OCI-LY7 (cell line): ENCODE measurements at regions of chrX and their contacts with region 1.

Region 1: GRCh38 chrX:41333744-41334259 is at the start of gene DDX3X:
- DNase-seq: peak; percentile 90
- H3K4me3 ChIP-seq: peak within 1 kb of the TSS; percentile 100
- H3K27ac ChIP-seq: peak within 1 kb of the TSS; percentile 93
- H3K4me1 ChIP-seq: peaks cover 50% of the 10 kb centered on the region
- CTCF ChIP-seq: no peak
- total RNA-seq, gene DDX3X: 69.6 and 75.1 TPM in 2 replicates

Region 2: GRCh38 chrX:40735325-40736169 is 598.3 kb before region 1 on chrX and contains the start of gene MED14:
- CTCF ChIA-PET with region 1: no interaction called
- POLR2A ChIA-PET with region 1: no interaction called
- intact Hi-C with region 1: loop called (anchors 10 kb)
- DNase-seq: peak; percentile 89
- H3K4me3 ChIP-seq: peak within 1 kb of the TSS; percentile 87
- H3K27ac ChIP-seq: peak within 1 kb of the TSS; percentile 85
- H3K4me1 ChIP-seq: peaks cover 19% of the 10 kb centered on the region
- CTCF ChIP-seq: peak; percentile 52
- total RNA-seq, gene MED14: 28.1 and 39.4 TPM in 2 replicates

Region 3: GRCh38 chrX:41084044-41084892 is 249.5 kb before region 1 on chrX:
- CTCF ChIA-PET with region 1: no interaction called
- POLR2A ChIA-PET with region 1: interaction called, 4 read pairs
- intact Hi-C with region 1: loop called (anchors 5 kb)
- DNase-seq: peak; percentile 91
- H3K4me3 ChIP-seq: peak overlapping the region; percentile 97
- H3K27ac ChIP-seq: peak overlapping the region; percentile 95
- H3K4me1 ChIP-seq: peaks cover 32% of the 10 kb centered on the region
- CTCF ChIP-seq: no peak

Region 4: GRCh38 chrX:41275661-41276609 is 57.9 kb before region 1 on chrX:
- CTCF ChIA-PET with region 1: interaction called, 6 read pairs
- POLR2A ChIA-PET with region 1: interaction called, 4 read pairs
- intact Hi-C with region 1: loop called (anchors 1 kb)
- DNase-seq: peak; percentile 66
- H3K4me3 ChIP-seq: peak overlapping the region; percentile 68
- H3K27ac ChIP-seq: peak overlapping the region; percentile 77
- H3K4me1 ChIP-seq: peaks cover 20% of the 10 kb centered on the region
- CTCF ChIP-seq: peak; percentile 68

Region 5: GRCh38 chrX:41441934-41442823 is 108.4 kb after region 1 on chrX:
- CTCF ChIA-PET with region 1: no interaction called
- POLR2A ChIA-PET with region 1: interaction called, 9 read pairs
- intact Hi-C with region 1: loop called (anchors 2 kb)
- DNase-seq: peak; percentile 88
- H3K4me3 ChIP-seq: peak overlapping the region; percentile 70
- H3K27ac ChIP-seq: peak overlapping the region; percentile 85
- H3K4me1 ChIP-seq: peaks cover 53% of the 10 kb centered on the region
- CTCF ChIP-seq: peak; percentile 71

Region 6: DNA sequence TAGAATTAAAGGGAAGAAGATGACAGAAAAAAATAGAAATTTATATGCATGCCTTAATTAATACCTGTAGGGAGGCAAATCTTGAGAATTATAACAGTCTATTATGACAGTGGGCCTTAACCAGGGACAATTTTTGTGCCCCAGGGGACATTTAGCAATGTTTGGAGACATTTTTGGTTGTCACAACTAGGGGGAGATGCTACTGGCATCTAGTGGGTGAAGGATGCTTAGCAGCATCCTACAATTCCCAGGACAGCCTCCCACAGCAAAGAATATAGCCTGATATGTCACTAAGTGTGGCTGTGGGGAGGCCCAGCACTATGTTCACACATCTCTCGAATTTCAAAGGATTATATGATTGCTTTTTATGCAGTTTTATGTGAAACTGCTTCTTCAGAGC is 400.7 kb after region 1 on chrX:
- CTCF ChIA-PET with region 1: no interaction called
- POLR2A ChIA-PET with region 1: no interaction called
- intact Hi-C with region 1: loop called (anchors 5 kb)
- DNase-seq: peak; percentile 56
- H3K4me3 ChIP-seq: peak overlapping the region; percentile 56
- H3K27ac ChIP-seq: peak overlapping the region; percentile 99
- H3K4me1 ChIP-seq: peaks cover 68% of the 10 kb centered on the region
- CTCF ChIP-seq: peak; percentile 75